Colonic mucosa (tissue), 4 donors: ENCODE measurements at regions of chr17 and their contacts with region 1.

Region 1: DNA sequence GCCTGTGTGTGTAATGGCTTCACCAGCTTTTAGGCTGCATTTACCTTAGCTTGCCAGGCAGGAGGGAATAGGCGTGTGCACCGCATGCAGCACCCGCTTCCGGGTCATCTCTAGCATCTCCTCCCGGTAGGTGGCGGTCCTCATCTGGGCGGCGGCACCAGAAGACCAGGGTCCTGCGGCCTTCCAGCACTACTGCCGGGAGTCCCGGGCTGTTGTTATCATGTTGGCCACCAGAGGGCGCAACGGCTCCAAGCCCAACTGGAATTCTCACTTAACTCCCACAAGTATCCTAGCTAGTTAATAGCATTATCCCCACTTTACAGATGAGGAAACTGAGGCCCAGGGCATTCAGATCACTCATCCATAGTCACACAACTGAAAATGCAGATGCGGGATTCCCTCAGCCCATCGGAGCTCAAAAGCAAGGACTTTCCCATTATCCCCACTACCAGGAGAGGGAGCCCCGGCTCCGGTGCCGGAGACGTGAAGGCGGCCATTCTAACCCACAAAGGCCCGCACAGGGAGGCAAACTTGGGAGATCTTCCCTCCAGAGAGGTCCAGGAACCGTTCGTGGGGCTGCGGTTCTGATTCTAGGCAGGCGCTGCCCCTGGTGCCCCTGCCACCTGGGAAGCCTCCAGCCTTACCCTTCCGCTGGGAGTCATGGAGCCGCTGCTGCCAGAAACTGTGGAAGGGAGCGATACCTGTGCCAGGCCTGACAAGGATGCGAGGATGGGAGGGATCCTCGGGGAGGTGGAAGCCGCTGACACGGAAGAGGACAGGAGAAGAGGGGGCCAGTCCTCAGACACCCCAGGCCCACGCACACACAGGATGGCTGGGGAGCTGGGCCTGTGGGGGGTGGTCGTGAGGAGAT is 23.9 kb downstream of the LGALS9 start:
- DNase-seq: peak; percentile 77
- H3K4me3 ChIP-seq: no peak overlapping the region
- H3K27ac ChIP-seq: no peak overlapping the region
- H3K4me1 ChIP-seq: no peaks in the 10 kb centered on the region
- H3K27me3 ChIP-seq: no peaks in the 10 kb centered on the region
- CTCF ChIP-seq: peak; percentile 90

Region 2: GRCh38 chr17:27153005-27153404 is 501.9 kb before region 1 on chr17:
- intact Hi-C with region 1: no loop called
- DNase-seq: no peak
- H3K4me3 ChIP-seq: no peak overlapping the region
- H3K27ac ChIP-seq: no peak overlapping the region
- H3K4me1 ChIP-seq: no peaks in the 10 kb centered on the region
- H3K27me3 ChIP-seq: no peaks in the 10 kb centered on the region
- CTCF ChIP-seq: no peak

Region 3: DNA sequence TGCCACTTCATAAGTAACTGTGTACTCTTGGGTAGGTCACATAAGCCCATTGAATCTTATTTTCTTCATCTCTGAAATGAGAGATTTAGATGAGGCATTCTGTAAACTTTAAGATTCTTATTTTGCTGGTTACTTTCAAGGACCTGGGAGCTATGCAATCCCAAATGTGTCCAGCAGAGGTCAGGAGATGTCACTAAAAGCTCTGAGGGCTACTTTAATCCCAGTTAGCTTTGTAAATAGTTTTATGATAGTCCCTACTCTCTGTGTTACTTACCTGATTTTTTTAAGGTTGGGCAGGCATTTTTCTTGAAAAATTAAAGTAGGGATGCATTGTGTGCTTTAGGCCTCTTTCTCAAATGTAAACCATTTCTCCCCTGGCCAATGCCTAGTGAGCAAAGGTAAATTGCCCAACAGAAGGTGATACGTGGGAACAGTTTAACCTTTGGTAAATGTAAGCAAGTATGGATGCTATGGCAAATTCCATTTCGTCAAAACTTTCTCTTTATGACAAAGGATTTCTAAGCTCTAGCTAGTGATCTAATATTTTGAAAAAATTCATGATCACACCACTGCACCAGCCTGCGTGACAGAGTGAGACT is 418.1 kb before region 1 on chr17:
- intact Hi-C with region 1: loop called (anchors 10 kb)
- DNase-seq: peak; percentile 88
- H3K4me3 ChIP-seq: no peak overlapping the region
- H3K27ac ChIP-seq: no peak overlapping the region
- H3K4me1 ChIP-seq: no peaks in the 10 kb centered on the region
- H3K27me3 ChIP-seq: no peaks in the 10 kb centered on the region
- CTCF ChIP-seq: peak; percentile 90

Region 4: GRCh38 chr17:27455914-27456680 is 198.8 kb before region 1 on chr17 and contains the start of gene KSR1:
- intact Hi-C with region 1: no loop called
- DNase-seq: peak; percentile 82
- H3K4me3 ChIP-seq: peak within 1 kb of the TSS; percentile 88
- H3K27ac ChIP-seq: peak within 1 kb of the TSS; percentile 51
- H3K4me1 ChIP-seq: no peaks in the 10 kb centered on the region
- H3K27me3 ChIP-seq: no peaks in the 10 kb centered on the region
- CTCF ChIP-seq: no peak
- total RNA-seq, gene KSR1: 13.9 to 16.5 TPM

Region 5: DNA sequence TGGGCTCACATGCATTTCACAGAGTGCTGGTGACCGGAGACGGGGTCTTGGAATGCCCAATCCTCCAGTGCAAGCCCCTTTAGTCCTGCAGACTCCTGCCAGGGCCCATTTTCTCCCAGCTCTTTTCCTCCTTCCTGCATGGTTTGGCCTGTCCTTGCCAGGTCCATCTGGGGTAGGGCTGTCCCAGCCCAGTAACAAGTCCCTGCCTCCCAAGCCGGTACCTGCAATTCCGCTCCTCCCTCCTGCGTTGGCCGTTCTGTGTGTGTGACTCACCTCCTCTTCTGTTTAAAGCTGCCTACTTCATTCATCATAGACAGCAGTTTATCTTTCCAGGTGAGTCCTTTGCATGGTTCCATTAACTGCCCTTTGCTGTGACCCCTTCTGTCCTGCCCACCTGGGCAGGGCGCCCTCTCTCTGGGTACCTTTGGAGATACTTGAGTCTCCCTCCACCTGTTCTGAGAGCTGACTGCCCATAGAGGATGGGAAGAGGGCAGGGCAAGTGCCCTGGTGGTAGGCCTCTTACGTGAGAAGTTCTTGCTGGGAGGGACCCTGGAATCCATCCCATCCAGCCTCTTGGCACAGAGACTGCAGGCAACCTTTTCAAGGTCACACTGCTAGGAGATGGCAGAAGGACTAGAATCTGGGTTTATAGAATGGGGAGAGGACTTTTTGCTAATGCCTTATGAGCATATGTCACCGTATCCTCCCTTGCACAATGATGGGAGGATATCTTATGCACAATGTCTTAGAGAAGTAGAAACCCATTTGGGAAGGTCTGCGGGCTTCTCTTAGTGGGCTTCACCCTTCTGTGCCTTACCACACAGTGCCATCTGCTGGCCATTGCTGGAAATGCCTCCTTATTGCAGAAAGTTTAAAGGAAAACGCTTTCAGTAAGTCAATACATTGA is 53.6 kb before region 1 on chr17:
- intact Hi-C with region 1: loop called (anchors 1 kb)
- DNase-seq: peak; percentile 91
- H3K4me3 ChIP-seq: no peak overlapping the region
- H3K27ac ChIP-seq: no peak overlapping the region
- H3K4me1 ChIP-seq: no peaks in the 10 kb centered on the region
- H3K27me3 ChIP-seq: no peaks in the 10 kb centered on the region
- CTCF ChIP-seq: peak; percentile 91

Region 6: GRCh38 chr17:27760069-27760885 is 105.4 kb after region 1 on chr17:
- intact Hi-C with region 1: loop called (anchors 2 kb)
- DNase-seq: peak; percentile 72
- H3K4me3 ChIP-seq: no peak overlapping the region
- H3K27ac ChIP-seq: no peak overlapping the region
- H3K4me1 ChIP-seq: no peaks in the 10 kb centered on the region
- H3K27me3 ChIP-seq: no peaks in the 10 kb centered on the region
- CTCF ChIP-seq: peak; percentile 88

Region 7: GRCh38 chr17:27879987-27880608 is 225.2 kb after region 1 on chr17:
- intact Hi-C with region 1: loop called (anchors 5 kb)
- DNase-seq: peak; percentile 87
- H3K4me3 ChIP-seq: no peak overlapping the region
- H3K27ac ChIP-seq: no peak overlapping the region
- H3K4me1 ChIP-seq: no peaks in the 10 kb centered on the region
- H3K27me3 ChIP-seq: no peaks in the 10 kb centered on the region
- CTCF ChIP-seq: peak; percentile 81